ENCODE measurements at regions of chr11 and their contacts with region 1.

Region 1: GRCh38 chr11:6473481-6474422 is at the start of gene TRIM3:
- DNase-seq: peak; percentile 97
- ATAC-seq: peak; percentile 93
- total RNA-seq, gene TRIM3: 12.5 TPM

Region 2: GRCh38 chr11:6234387-6235107 is 239.2 kb before region 1 on chr11 and contains the start of gene FHIP1B:
- intact Hi-C with region 1: loop called (anchors 10 kb)
- DNase-seq: peak; percentile 100
- ATAC-seq: peak; percentile 98
- total RNA-seq, gene FHIP1B: 13.3 TPM

Region 3: GRCh38 chr11:6576471-6577373 is 103.0 kb after region 1 on chr11:
- intact Hi-C with region 1: no loop called
- DNase-seq: no peak
- ATAC-seq: peak; percentile 73

Region 4: GRCh38 chr11:6943131-6943530 is 469.4 kb after region 1 on chr11:
- intact Hi-C with region 1: no loop called
- DNase-seq: no peak
- ATAC-seq: no peak

Measured in Right ventricle myocardium inferior (tissue), 1 donor.